Heart right ventricle (tissue), 16 donors: ENCODE measurements at regions of chr13 and their contacts with region 1.

Region 1: GRCh38 chr13:113490496-113491417 is at the start of gene DCUN1D2:
- DNase-seq: peak; percentile 94 to 97
- ATAC-seq: peak; percentile 92 to 96 (median 94)
- H3K4me3 ChIP-seq: peak within 1 kb of the TSS; percentile 60 to 98 (median 88)
- H3K27ac ChIP-seq: peak within 1 kb of the TSS; percentile 79 to 94 (median 92)
- H3K4me1 ChIP-seq: peaks cover 6 to 87% (median 77%) of the 10 kb centered on the region in 9 donors
- H3K27me3 ChIP-seq: no peaks in the 10 kb centered on the region
- CTCF ChIP-seq: no peak
- total RNA-seq, gene DCUN1D2: 97.7 to 307 (median 225) TPM

Region 2: GRCh38 chr13:112908342-112908741 is 582.4 kb before region 1 on chr13:
- intact Hi-C with region 1: no loop called
- DNase-seq: no peak
- ATAC-seq: no peak
- H3K4me3 ChIP-seq: no peak overlapping the region
- H3K27ac ChIP-seq: no peak overlapping the region
- H3K4me1 ChIP-seq: no peaks in the 10 kb centered on the region
- H3K27me3 ChIP-seq: peaks cover 0 to 33% (median 13%) of the 10 kb centered on the region in 7 donors
- CTCF ChIP-seq: no peak

Region 3: DNA sequence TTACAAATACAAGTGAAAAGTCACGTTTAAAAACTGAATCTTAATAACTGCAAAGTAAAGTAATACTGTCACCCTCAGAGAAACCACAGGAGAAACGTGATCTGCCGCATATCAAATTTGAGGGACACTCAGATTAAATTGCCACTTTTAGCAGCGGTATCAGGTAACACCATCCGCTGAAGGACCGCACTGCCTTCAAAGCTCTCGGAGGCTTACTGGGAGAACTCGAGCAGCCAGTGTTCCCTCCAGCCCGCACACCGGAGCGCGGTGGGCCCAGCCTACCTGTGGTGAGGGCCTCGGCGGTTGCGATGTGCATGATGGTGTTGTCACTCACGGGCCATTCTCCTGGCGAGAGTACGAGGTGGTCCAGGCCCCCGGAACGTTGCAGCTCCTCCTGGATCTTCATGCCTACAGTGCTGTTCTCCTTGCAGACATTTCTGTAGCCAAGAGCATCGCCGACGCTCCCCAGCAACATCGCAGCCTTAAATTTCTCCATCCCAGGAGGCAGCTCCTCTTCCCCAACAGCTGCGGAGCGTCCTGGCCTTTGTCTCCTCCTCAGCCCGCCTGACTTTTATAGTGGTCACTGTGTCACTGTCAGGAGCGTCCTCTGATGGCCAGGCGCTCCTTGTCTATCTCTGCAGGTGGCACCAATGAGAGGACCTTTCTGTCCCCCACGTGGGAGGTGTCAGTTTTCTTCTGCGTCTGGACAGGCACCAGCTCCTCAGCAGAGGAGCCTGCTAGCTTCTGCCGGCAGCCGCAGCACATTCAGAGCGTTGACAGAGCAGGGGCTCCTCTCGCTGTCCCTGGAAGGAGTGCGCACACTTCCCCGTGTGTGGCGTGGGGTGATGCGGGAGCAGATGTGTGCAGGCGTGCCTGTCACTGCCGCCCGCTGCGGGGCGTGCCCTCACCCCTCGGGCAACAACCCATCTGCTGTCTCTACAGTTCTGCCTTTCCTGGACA is 37.5 kb before region 1 on chr13 and contains the start of gene ADPRHL1:
- intact Hi-C with region 1: loop called in 3 of 10 experiments (anchors 2 to 5 kb)
- DNase-seq: peak; percentile 61 to 78
- ATAC-seq: peak; percentile 61 to 83 (median 78)
- H3K4me3 ChIP-seq: peak within 1 kb of the TSS; percentile 1 to 67 (median 53)
- H3K27ac ChIP-seq: peak within 1 kb of the TSS; percentile 62 to 93 (median 81)
- H3K4me1 ChIP-seq: peaks cover 13 to 44% (median 18%) of the 10 kb centered on the region in 9 donors
- H3K27me3 ChIP-seq: no peaks in the 10 kb centered on the region
- CTCF ChIP-seq: no peak
- total RNA-seq, gene ADPRHL1: 381 to 939 (median 762) TPM

Region 4: GRCh38 chr13:113458253-113459065 is 32.3 kb before region 1 on chr13:
- intact Hi-C with region 1: loop called in 3 of 10 experiments (anchors 2 to 5 kb)
- DNase-seq: peak in 1 of 2 donors; percentile 43
- ATAC-seq: peak; percentile 31 to 76 (median 61)
- H3K4me3 ChIP-seq: no peak overlapping the region
- H3K27ac ChIP-seq: peak overlapping the region in 8 of 10 donors; percentile 13 to 71 (median 44)
- H3K4me1 ChIP-seq: peaks cover 0 to 58% (median 10%) of the 10 kb centered on the region in 9 donors
- H3K27me3 ChIP-seq: no peaks in the 10 kb centered on the region
- CTCF ChIP-seq: peak in 8 of 9 donors; percentile 42 to 63 (median 52)

Region 5: DNA sequence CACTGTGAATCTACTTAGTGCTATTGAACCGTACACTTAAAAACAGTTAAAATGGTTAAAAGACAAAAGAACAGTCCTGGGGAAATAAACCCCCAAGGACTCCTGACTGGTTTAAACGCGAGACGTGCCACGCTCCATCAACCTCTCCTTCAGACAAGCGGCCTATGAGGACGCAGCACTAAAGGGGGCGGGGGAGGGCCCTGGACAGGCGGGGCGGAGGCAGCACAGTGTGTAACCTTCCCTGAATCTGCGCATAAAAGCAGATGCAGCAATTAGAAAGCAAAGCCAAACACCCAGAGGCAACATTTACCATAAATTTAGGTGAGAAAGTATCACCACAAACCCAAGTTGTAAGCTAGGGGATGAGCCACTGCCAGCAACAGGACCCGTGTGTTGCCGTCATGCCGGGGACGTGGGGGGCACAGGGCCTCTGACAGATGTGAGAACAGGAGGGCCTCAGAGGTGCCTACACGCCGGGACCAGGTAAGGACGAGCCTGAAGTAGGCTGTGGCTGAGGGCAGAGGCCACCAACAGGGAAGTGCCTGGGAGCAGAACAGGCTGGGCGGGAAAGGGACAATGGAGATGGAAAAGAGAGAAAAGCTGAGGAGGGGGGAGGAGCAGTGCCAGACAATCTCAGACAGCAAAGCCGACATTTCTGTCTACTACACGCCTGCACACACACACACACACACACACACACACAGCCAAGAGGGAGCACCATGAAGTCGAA is 22.1 kb before region 1 on chr13:
- intact Hi-C with region 1: loop called in 1 of 10 experiments (anchors 1 kb)
- DNase-seq: no peak
- ATAC-seq: peak in 4 of 8 donors; percentile 38 to 78 (median 65)
- H3K4me3 ChIP-seq: no peak overlapping the region
- H3K27ac ChIP-seq: peak overlapping the region in 1 of 10 donors; percentile 17
- H3K4me1 ChIP-seq: peaks cover 0 to 21% (median 6%) of the 10 kb centered on the region in 9 donors
- H3K27me3 ChIP-seq: no peaks in the 10 kb centered on the region
- CTCF ChIP-seq: no peak

Region 6: GRCh38 chr13:113545455-113545930 is 54.7 kb after region 1 on chr13:
- intact Hi-C with region 1: loop called in 1 of 10 experiments (anchors 5 kb)
- DNase-seq: no peak
- ATAC-seq: peak in 7 of 8 donors; percentile 23 to 61 (median 47)
- H3K4me3 ChIP-seq: peak overlapping the region in 4 of 10 donors; percentile 5 to 36 (median 16)
- H3K27ac ChIP-seq: peak overlapping the region in 8 of 10 donors; percentile 18 to 83 (median 64)
- H3K4me1 ChIP-seq: peaks cover 20 to 46% (median 35%) of the 10 kb centered on the region in 9 donors
- H3K27me3 ChIP-seq: no peaks in the 10 kb centered on the region
- CTCF ChIP-seq: no peak